Motor neuron (in vitro differentiated cells): ENCODE measurements at regions of chrX and their contacts with region 1.

Region 1: GRCh38 chrX:18210470-18210869 is 10.2 kb downstream of the BEND2 start:
- ATAC-seq: no peak
- H3K4me3 ChIP-seq: no peak overlapping the region
- H3K27ac ChIP-seq: no peak overlapping the region
- H3K4me1 ChIP-seq: peaks cover 0 to 3% of the 10 kb centered on the region in 2 donors

Region 2: GRCh38 chrX:17758382-17758781 is 452.1 kb before region 1 on chrX:
- in situ Hi-C with region 1: loop called in 1 of 9 experiments (anchors 25 kb)
- ATAC-seq: no peak
- H3K4me3 ChIP-seq: no peak overlapping the region
- H3K27ac ChIP-seq: no peak overlapping the region
- H3K4me1 ChIP-seq: no peaks in the 10 kb centered on the region

Region 3: DNA sequence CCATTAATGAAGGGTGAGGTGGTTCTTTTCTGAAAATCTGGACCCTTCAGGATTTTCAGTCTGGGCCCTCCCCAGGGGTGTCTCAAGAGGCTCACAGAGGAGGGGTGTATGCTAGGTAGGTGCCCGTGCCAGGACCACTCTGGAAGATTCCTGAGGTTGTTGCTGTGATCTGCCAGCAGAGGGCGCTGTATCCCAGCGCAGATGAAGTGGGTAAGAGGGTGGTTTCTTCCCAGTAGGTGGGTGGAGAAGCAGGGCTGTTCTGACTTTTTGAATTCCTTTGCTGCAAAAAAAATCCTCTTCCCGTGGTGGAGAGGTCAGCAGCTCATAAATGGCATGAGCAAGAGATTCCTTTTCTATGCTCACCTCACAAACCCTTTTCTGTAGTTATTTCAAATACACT is 422.0 kb before region 1 on chrX:
- in situ Hi-C with region 1: loop called in 1 of 9 experiments (anchors 25 kb)
- ATAC-seq: peak; percentile 65 to 84 (median 74)
- H3K4me3 ChIP-seq: no peak overlapping the region
- H3K27ac ChIP-seq: no peak overlapping the region
- H3K4me1 ChIP-seq: peaks cover 0 to 4% of the 10 kb centered on the region in 2 donors

Region 4: DNA sequence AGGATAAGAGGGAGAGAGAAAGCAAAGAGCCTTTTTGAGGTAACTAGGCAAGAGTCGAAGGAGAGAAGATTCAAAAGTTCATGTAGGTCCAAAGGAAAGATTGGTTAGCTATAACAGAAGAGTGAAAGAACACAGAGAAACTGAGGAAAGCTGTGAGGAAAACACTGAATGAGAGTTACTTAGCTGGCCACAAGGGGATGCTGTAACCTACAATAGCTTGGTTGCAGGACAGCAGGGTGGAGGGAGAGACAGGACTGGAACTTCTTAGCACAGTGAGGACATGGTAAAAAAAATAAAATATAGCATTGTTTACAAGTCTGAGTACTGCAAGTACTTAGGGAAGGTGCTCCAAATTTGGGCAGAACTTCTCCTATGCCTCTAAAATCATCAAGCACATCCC is 397.7 kb before region 1 on chrX:
- in situ Hi-C with region 1: no loop called
- ATAC-seq: peak in 1 of 8 experiments; percentile 38
- H3K4me3 ChIP-seq: no peak overlapping the region
- H3K27ac ChIP-seq: no peak overlapping the region
- H3K4me1 ChIP-seq: no peaks in the 10 kb centered on the region

Region 5: GRCh38 chrX:18558799-18559198 is 348.3 kb after region 1 on chrX:
- in situ Hi-C with region 1: no loop called
- ATAC-seq: no peak
- H3K4me3 ChIP-seq: no peak overlapping the region
- H3K27ac ChIP-seq: no peak overlapping the region
- H3K4me1 ChIP-seq: no peaks in the 10 kb centered on the region